Right lobe of liver (tissue), 6 donors: ENCODE measurements at regions of chr18 and their contacts with region 1.

Region 1: GRCh38 chr18:47772374-47773248 is 157.8 kb downstream of the SMAD2 start:
- DNase-seq: peak; percentile 60 to 69 (median 64)
- ATAC-seq: peak; percentile 90 to 98 (median 92)
- H3K4me3 ChIP-seq: no peak overlapping the region
- H3K27ac ChIP-seq: no peak overlapping the region
- H3K4me1 ChIP-seq: no peaks in the 10 kb centered on the region
- H3K27me3 ChIP-seq: no peaks in the 10 kb centered on the region
- CTCF ChIP-seq: peak; percentile 70 to 87 (median 80)
- POLR2A ChIP-seq: no peak

Region 2: DNA sequence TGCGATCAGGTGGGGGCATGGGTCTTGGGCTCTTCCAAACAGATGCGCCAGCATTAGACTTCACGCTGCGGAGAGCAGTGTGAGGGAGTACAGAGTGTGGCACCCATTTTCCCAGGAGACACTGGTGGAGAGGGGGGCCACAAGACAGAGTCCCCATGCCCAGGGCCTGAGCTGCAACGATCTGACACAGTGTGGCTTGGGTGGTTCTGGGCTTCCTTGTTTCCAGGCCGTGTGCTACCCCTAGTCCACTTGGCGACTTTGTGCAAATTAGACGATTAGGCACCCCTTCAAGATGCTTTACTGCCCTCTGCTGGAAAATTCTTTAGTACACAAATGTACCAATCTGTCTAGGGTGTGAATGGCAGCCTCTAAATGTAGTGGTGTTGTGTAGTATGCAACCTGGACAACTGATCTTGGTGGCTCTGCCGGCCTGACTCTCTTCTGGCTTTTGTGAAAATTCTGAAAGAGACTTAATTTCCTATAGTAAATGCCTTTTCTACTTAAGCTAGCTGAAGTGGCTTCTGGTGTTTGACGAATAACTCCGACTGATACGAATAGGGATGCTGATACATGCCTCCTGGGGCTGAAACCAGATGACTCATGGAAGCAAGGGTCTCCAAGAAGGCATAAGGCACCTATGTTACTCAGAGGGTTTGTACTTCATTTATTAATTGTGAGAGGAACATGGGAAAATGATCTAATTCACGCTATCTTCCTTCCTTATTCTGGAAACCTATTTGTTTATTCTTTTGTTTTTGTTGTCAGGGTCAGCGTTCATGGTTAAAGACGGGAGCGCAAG is 250.1 kb after region 1 on chr18:
- intact Hi-C with region 1: loop called (anchors 10 kb)
- DNase-seq: peak in 1 of 3 donors; percentile 42
- ATAC-seq: peak; percentile 69 to 84 (median 80)
- H3K4me3 ChIP-seq: no peak overlapping the region
- H3K27ac ChIP-seq: no peak overlapping the region
- H3K4me1 ChIP-seq: peaks cover 0 to 3% (median under 1%) of the 10 kb centered on the region in 4 donors
- H3K27me3 ChIP-seq: no peaks in the 10 kb centered on the region
- CTCF ChIP-seq: peak; percentile 47 to 71 (median 54)
- POLR2A ChIP-seq: no peak